Left cardiac atrium (tissue), 4 donors: ENCODE measurements at regions of chr7 and their contacts with region 1.

Region 1: GRCh38 chr7:135801045-135801693 is 52.6 kb upstream of the FAM180A start:
- DNase-seq: no peak
- ATAC-seq: peak; percentile 71

Region 2: GRCh38 chr7:136009488-136010079 is 208.4 kb after region 1 on chr7:
- intact Hi-C with region 1: loop called (anchors 1 to 2 kb)
- DNase-seq: no peak
- ATAC-seq: peak; percentile 19 to 42